CD8-positive, alpha-beta T cell (primary cell): ENCODE measurements at regions of chr12 and their contacts with region 1.

Region 1: GRCh38 chr12:115351221-115352077 is 667.5 kb upstream of the TBX3 start:
- DNase-seq: no peak
- ATAC-seq: no peak
- H3K4me3 ChIP-seq: no peak overlapping the region
- H3K4me3 Mint-ChIP-seq: no peak overlapping the region
- H3K27ac ChIP-seq: no peak overlapping the region
- H3K27ac Mint-ChIP-seq: no peak overlapping the region
- H3K4me1 ChIP-seq: no peaks in the 10 kb centered on the region
- H3K4me1 Mint-ChIP-seq: no peaks in the 10 kb centered on the region
- H3K27me3 ChIP-seq: no peaks in the 10 kb centered on the region
- H3K27me3 Mint-ChIP-seq: no peaks in the 10 kb centered on the region
- CTCF ChIP-seq: no peak

Region 2: GRCh38 chr12:115332945-115333344 is 18.5 kb before region 1 on chr12:
- CTCF ChIA-PET with region 1: no interaction called
- POLR2A ChIA-PET with region 1: no interaction called
- intact Hi-C with region 1: loop called in 1 of 2 experiments (anchors 1 kb)
- DNase-seq: no peak
- ATAC-seq: no peak
- H3K4me3 ChIP-seq: no peak overlapping the region
- H3K4me3 Mint-ChIP-seq: no peak overlapping the region
- H3K27ac ChIP-seq: no peak overlapping the region
- H3K27ac Mint-ChIP-seq: no peak overlapping the region
- H3K4me1 ChIP-seq: no peaks in the 10 kb centered on the region
- H3K4me1 Mint-ChIP-seq: no peaks in the 10 kb centered on the region
- H3K27me3 ChIP-seq: no peaks in the 10 kb centered on the region
- H3K27me3 Mint-ChIP-seq: no peaks in the 10 kb centered on the region
- CTCF ChIP-seq: no peak

Region 3: DNA sequence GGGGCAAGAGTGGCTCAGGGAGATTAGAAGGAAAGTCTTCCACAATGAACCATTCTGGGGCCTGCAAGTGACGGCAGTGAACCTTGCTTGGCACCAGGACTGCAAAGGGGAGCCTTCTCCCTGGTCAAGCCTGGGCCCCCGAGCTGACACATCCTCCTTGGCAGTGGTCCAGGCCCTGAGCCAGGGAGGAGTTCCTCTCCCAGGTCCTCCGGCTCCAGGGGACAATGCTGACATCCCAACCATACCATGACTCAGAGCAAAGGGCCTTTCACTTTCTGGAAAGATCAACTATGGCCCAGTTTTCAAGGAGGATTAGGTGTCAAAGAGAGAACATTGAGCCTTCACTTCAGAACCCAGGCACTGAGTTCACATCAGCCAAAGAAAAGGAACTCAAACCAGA is 89.0 kb after region 1 on chr12:
- CTCF ChIA-PET with region 1: no interaction called
- POLR2A ChIA-PET with region 1: no interaction called
- intact Hi-C with region 1: no loop called
- DNase-seq: no peak
- ATAC-seq: no peak
- H3K4me3 ChIP-seq: no peak overlapping the region
- H3K4me3 Mint-ChIP-seq: no peak overlapping the region
- H3K27ac ChIP-seq: no peak overlapping the region
- H3K27ac Mint-ChIP-seq: no peak overlapping the region
- H3K4me1 ChIP-seq: no peaks in the 10 kb centered on the region
- H3K4me1 Mint-ChIP-seq: no peaks in the 10 kb centered on the region
- H3K27me3 ChIP-seq: no peaks in the 10 kb centered on the region
- H3K27me3 Mint-ChIP-seq: peaks cover 2% of the 10 kb centered on the region
- CTCF ChIP-seq: no peak